GM13976 (cell line): ENCODE measurements at regions of chr17 and their contacts with region 1.

Region 1: DNA sequence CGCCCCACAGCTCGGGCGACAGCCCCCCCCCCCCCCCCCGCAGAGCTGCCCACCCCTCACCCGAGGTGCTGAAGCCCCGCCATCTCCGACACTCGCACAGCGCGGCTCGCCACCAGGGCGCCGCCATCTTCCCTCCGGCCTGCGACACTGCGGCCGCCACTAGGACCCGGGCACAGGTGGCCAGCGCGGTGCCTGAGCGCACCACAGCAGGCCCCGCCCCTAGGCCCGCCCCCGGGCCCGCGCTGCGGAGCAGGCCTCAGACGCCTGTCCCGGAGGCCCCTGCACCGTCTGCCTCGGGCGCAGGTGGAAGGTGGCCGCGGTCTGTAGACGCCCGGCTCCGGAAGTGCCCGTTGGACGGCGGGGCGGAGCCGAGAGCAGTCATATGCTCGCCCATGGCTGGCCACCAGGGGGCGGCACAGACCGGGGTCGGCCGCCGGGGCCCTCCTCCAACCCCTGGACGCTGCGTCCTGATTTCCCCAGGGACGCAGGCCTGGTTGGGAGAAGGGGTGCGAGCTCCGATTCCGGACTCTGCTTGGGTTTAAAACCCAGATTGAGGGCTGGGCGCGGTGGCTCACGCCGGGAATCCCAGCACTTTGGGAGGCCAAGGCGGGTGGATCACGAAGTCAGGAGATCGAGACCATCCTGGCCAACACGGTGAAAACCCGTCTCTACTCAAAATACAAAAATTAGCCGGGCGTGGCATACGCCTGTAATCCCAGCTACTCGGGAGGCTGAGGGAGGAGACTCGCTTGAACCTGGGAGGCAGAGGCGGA is at the start of gene MRPL38:
- DNase-seq: peak; percentile 99
- CTCF ChIP-seq: peak; percentile 94

Region 2: GRCh38 chr17:75352079-75352569 is 552.8 kb before region 1 on chr17:
- in situ Hi-C with region 1: no loop called
- DNase-seq: no peak
- CTCF ChIP-seq: no peak

Region 3: DNA sequence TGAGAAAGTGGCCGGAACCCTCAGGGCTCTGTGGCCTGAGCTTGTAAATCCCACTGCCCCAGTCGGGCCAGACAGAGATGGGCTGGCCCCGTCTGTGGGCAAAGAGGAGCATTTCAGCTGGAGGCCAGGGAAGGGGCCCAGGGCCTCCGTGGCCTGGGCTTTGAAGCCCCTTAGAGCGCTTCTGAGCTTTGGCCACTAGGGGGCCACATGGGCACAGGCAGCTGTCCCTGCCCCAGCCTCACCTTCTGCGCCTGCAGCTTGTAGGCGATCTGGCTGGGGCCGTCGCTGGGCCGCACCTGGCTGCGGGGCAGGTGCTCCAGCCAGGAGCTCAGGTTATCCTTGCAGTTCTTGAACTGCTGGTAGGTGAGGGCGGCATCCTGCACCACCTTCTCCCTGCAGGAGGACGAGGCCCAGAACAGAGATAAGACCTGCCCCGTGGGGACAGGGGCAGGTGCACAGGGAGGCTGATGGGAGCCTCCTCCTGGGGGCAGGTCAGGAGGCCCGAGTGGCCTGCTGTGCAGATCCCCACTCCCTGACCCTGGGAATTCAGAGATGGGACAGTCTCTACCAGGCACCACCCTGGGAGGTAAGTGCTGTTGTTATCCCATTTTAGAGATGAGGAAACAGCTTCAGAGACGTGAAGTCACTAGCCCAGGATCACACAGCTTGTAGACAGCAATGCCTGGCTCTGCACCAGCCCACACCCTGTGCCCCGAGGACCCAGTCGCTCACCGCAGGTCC is 109.4 kb after region 1 on chr17:
- in situ Hi-C with region 1: loop called (anchors 5 kb)
- DNase-seq: peak; percentile 95
- CTCF ChIP-seq: peak; percentile 91

Region 4: DNA sequence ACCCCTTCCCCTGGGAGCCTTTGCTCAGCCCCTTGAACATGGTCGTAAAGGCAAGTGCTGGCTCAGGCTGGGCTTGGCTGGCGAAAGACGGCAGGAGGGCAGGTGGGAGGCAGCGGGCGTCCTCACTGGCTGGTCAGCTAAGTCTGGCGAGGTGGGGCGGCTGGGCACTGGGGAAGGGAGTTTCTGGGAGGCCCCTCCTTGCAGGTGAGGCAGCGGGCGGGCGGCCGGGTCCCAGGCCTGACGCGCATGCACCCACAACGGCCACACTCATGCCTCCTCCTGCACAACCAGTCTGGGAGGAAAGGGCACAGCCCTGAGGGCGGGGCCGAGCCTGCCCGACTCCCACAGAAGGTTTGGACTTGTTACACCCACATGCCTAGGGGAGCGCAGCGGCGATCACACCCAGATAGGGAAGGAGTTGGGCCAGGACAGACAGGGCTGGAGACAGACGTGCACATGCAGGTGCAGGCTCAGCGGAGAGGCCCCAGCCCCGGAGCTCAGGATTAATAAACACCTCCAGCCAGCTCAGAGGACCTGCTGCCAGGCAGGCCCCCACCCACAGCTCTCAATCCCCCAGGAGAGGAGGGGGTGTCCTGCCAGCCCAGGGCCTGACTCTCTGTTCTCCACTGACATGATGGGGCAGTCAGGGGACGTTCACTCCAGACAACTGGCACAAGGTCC is 122.4 kb after region 1 on chr17 and contains the start of gene EVPL:
- in situ Hi-C with region 1: no loop called
- DNase-seq: no peak
- CTCF ChIP-seq: no peak

Region 5: GRCh38 chr17:76107509-76107908 is 202.6 kb after region 1 on chr17:
- in situ Hi-C with region 1: no loop called
- DNase-seq: no peak
- CTCF ChIP-seq: no peak

Region 6: DNA sequence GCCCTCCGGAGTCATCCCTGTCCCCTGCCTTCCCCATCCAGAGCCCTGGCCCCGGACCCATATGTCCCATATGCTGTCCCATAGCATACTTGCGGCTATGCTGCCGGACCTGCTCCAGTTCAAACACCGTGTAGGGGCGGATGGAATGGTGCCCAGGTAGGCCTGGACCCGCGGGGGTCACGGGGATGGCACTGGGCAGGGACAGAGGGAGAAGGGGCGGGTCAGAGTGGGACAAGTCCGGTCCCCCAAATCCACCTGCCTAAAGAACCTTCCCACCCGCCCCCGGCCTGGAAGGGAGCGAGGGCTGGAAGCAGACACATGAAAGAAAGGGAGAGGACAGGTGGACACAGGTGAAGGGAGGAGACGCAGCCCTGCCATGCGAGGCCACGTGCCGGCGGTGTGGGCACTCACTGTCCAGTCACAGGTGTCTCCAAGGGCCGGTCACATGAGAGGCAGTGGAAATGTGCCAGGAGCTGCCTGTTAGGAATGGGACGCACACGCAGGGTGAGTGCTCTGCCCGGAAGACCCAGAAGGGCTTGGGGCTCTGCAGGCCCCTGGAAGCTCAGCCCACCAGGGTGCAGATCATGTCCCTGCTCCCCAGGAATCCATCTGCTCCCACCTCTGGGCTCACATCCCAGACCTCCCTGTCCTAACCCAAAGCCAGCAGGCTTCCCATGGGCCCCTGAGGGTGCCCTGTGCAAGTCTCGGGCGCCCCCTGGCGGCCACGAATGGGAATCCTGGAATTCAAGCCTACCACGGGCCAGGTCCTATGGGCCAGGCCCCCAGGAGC is 374.2 kb after region 1 on chr17:
- in situ Hi-C with region 1: loop called (anchors 25 kb)
- DNase-seq: peak; percentile 92
- CTCF ChIP-seq: peak; percentile 90